Left cardiac atrium (tissue), 4 donors: ENCODE measurements at regions of chrX and their contacts with region 1.

Region 1: GRCh38 chrX:71178908-71179307 is 34.3 kb downstream of the NLGN3 start:
- DNase-seq: peak; percentile 37
- ATAC-seq: peak in 1 of 2 donors; percentile 41

Region 2: DNA sequence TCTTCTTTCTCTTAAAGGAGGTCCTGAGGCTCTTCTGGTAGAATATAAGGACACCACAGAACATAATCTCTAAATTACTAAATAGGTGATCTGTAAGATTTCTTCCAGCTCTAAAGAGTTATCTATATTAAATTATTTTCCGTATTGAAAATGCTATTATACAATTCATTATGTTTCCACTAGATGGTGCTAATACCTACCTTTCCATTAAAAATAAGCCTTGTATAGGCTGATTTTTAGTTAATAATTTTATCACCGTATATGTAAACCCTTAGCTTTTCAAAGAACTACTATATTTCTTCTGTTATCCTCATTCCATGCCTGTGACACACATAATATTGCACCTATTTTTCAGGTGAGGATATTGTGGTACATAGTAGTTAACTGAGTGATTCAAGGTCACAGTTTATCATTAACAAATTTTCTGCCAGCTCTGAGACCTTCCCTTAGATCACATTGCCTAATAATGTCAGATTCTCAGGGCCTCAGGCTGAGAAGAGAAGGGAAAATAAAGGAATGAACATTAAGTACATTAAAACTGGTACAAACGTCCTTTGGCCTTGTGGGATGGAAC is 409.2 kb before region 1 on chrX:
- intact Hi-C with region 1: loop called in 1 of 2 experiments (anchors 10 kb)
- DNase-seq: no peak
- ATAC-seq: no peak

Region 3: DNA sequence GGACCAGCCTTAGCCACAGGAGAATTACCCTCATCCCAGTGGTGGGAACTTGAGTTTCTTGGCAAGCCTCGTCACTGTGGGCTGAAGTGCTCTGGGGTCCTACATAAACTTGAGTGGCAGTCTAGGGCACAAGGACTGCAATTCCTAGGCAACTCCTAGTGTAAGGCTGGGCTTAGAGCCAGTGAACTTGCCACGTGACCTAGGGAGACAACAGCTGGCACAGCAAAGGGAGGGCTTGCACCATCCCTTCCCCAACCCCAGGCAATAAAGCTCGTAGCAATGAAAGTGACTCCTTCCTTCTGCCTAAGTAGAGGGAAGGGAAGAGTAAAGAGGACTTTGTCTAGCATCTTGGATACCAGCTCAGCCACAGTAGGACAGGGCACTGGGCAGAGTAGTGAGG is 352.2 kb before region 1 on chrX:
- intact Hi-C with region 1: no loop called
- DNase-seq: no peak
- ATAC-seq: no peak

Region 4: DNA sequence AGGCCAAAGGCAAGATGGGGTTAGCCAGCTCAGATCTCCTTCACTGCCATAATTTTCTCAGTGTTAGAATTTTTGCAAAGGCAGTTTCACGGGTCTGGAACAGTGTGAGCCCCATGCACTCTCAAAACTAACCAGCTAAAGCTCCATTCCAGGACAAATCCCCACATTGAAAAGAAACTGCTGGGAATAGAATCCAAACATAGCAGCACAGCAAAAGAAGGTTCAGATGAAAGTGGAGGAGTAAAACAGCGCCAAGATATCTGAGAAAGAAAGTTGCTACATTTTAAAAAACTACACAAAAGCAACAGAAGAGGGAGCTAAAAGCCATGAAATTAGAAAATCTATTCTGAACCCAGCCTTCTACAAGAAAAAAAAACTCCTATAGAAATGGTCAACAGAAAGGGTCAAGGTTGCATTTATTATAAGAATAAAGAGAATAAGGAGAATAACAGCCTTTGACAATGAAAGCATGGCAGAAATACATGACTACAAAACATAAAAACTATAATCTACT is 208.4 kb before region 1 on chrX:
- intact Hi-C with region 1: loop called in 1 of 2 experiments (anchors 5 kb)
- DNase-seq: no peak
- ATAC-seq: no peak

Region 5: DNA sequence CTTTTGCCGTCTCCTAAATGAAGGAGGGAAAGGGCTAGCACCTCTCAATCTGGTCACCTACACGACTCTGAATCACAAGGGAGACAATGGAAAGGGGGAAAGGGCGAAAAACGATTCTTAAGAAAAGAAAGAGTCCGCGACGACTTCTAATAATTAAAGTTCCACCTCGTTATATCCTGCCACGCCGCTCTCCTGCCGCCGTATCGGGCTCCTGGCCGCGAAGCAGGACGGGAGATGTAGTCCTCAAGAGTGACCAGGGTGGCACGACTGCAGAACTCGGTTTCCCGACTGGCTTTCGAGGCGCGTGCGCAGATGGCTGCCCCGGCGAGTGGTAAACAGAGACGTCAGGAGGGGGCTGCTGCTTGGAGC is 83.4 kb before region 1 on chrX and contains the start of gene FOXO4:
- intact Hi-C with region 1: loop called in 1 of 2 experiments (anchors 5 kb)
- DNase-seq: peak; percentile 93
- ATAC-seq: peak; percentile 96 to 97
- total RNA-seq, gene FOXO4: 28.5 to 30.9 TPM